IMR-90 (cell line): ENCODE measurements at regions of chr2 and their contacts with region 1.

Region 1: GRCh38 chr2:200428951-200429665 is 80.8 kb downstream of the KCTD18 start:
- DNase-seq: no peak
- ATAC-seq: no peak
- H3K4me3 ChIP-seq: no peak overlapping the region
- H3K27ac ChIP-seq: no peak overlapping the region
- H3K4me1 ChIP-seq: peaks cover 3% of the 10 kb centered on the region; the same call in 1 of the 2 replicates
- H3K27me3 ChIP-seq: no peaks in the 10 kb centered on the region
- CTCF ChIP-seq: no peak
- POLR2A ChIP-seq: no peak
- RAD21 ChIP-seq: no peak

Region 2: DNA sequence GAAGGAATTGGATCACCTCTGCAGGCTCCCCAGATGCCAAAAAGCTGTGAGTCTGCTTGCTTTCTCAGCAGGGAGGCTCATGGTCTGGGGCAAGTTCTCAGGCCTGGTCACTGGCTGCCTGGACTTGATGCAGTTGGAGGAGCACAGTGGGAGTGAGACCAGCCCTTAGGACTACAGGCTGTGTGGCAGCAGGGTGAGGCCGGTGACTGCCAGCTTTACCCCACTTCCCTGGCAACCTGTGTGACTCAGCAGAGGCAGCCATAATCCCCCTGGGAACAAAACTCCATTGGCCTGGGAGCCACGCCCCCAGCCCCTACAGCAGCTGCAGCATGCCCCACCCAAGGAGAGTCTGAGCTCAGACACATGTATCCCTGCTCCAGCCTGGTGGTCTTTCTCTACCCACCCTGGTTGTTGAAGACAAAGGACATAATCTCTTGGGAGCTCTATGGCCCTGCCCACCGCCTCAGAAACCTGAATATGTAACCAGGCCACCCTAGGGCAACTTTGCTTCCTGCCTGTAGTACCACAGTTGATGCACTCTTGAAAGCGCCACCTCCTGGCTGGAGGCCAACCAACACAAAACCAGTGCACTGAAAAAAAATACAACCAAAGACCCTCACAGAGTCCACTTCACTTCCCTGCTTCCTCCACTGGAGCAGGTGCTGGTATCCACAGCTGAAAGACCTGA is 229.4 kb before region 1 on chr2:
- CTCF ChIA-PET with region 1: no interaction called
- POLR2A ChIA-PET with region 1: no interaction called
- dilution Hi-C with region 1: no loop called
- in situ Hi-C with region 1: no loop called
- intact Hi-C with region 1: no loop called
- DNase-seq: no peak
- ATAC-seq: no peak
- H3K4me3 ChIP-seq: no peak overlapping the region
- H3K27ac ChIP-seq: no peak overlapping the region
- H3K4me1 ChIP-seq: no peaks in the 10 kb centered on the region; the same call in 1 of the 2 replicates
- H3K27me3 ChIP-seq: peaks cover 2% of the 10 kb centered on the region; the same call in 1 of the 2 replicates
- CTCF ChIP-seq: no peak
- POLR2A ChIP-seq: no peak
- RAD21 ChIP-seq: no peak

Region 3: GRCh38 chr2:200442471-200442870 is 13.4 kb after region 1 on chr2:
- CTCF ChIA-PET with region 1: no interaction called
- POLR2A ChIA-PET with region 1: no interaction called
- dilution Hi-C with region 1: no loop called
- in situ Hi-C with region 1: no loop called
- intact Hi-C with region 1: loop called (anchors 1 kb)
- DNase-seq: peak; percentile 86
- ATAC-seq: peak; percentile 92
- H3K4me3 ChIP-seq: no peak overlapping the region
- H3K27ac ChIP-seq: peak overlapping the region; percentile 79; the same call in 1 of the 2 replicates
- H3K4me1 ChIP-seq: peaks cover 26% of the 10 kb centered on the region
- H3K27me3 ChIP-seq: no peaks in the 10 kb centered on the region
- CTCF ChIP-seq: no peak
- POLR2A ChIP-seq: no peak
- RAD21 ChIP-seq: no peak